PC-9 (cell line): ENCODE measurements at regions of chr6 and their contacts with region 1.

Region 1: DNA sequence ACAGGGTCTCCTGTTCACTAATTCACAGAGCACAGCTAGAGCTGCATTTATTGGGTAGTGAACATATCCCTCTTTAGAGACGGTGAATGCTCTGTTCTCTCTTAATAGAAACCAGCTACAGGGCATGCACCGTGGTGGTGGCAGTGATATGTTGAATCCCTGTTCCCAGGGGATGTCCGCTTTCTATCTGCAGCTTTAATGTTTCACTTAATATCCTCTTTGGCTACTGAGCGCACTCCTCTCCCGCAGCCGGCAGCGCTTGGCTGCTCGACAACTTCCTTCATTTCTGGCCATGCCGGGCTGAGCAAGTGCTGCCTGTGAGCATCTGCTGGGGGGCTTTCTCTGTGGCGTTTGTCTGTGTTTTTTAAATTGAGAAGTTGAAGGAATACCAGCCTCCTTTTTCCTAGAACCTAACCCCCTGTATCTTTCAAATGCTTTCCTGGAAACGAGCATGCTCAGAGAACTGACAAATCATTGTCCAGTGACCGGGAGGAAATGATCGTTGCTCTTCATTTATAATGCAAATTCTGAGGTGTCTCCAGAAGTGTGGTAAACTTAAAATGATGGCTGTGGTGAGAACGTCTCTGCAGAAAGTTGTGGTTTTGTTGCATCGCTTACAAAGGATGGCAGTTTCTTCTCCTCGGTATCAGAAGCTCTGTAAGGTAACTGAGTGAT is 297.9 kb downstream of the UTRN start:
- DNase-seq: no peak
- H3K4me3 ChIP-seq: no peak overlapping the region
- H3K27ac ChIP-seq: no peak overlapping the region
- H3K4me1 ChIP-seq: no peaks in the 10 kb centered on the region
- H3K27me3 ChIP-seq: no peaks in the 10 kb centered on the region
- CTCF ChIP-seq: no peak

Region 2: GRCh38 chr6:144931172-144932035 is 348.3 kb after region 1 on chr6:
- CTCF ChIA-PET with region 1: no interaction called
- POLR2A ChIA-PET with region 1: no interaction called
- intact Hi-C with region 1: loop called (anchors 2 kb)
- DNase-seq: peak; percentile 30 to 49
- H3K4me3 ChIP-seq: no peak overlapping the region
- H3K27ac ChIP-seq: no peak overlapping the region
- H3K4me1 ChIP-seq: 0 out of 2 replicates have a peak, but pooled peaks cover 11% of the 10 kb centered on the region
- H3K27me3 ChIP-seq: no peaks in the 10 kb centered on the region
- CTCF ChIP-seq: peak; percentile 78

Region 3: GRCh38 chr6:145214570-145214969 is 631.5 kb after region 1 on chr6:
- CTCF ChIA-PET with region 1: no interaction called
- POLR2A ChIA-PET with region 1: no interaction called
- intact Hi-C with region 1: loop called (anchors 2 kb)
- DNase-seq: no peak
- H3K4me3 ChIP-seq: no peak overlapping the region
- H3K27ac ChIP-seq: no peak overlapping the region
- H3K4me1 ChIP-seq: no peaks in the 10 kb centered on the region
- H3K27me3 ChIP-seq: no peaks in the 10 kb centered on the region
- CTCF ChIP-seq: peak; percentile 79

Region 4: DNA sequence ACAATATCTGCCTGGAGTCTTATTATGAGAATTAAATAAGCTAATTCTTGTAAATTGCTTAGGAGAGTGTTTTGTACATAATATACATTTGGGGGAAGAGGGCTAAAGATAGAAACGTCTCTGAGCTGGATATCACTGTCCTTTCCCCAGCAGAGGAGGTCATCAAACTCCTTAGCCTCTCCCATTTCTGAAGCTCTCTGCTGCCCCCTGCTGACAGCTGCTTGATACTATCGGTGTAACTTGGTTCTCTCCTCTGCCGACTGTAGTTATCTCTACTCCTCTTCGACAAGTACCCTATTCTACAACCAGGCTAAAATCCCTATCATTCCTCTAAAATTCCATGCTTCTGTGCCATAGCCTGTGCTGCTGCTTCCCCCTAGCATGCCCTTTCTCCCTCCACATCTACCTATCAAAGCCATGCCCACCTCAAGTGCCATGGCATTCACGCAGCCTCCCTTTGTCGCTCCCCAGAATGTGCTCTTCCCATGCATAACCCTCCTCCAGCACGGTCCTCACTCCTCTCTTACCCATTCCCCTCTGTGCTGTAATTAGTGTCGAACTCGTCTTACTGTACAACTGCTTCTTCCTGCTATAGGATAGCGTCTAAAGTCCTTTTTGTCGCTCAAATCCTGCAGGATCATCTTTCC is 1051.0 kb after region 1 on chr6:
- CTCF ChIA-PET with region 1: interaction called, 3 read pairs
- POLR2A ChIA-PET with region 1: no interaction called
- intact Hi-C with region 1: loop called (anchors 1 kb)
- DNase-seq: peak; percentile 43 to 69
- H3K4me3 ChIP-seq: no peak overlapping the region
- H3K27ac ChIP-seq: no peak overlapping the region
- H3K4me1 ChIP-seq: no peaks in the 10 kb centered on the region
- H3K27me3 ChIP-seq: no peaks in the 10 kb centered on the region
- CTCF ChIP-seq: peak; percentile 91

Region 5: GRCh38 chr6:145704143-145704781 is 1121.2 kb after region 1 on chr6:
- CTCF ChIA-PET with region 1: no interaction called
- POLR2A ChIA-PET with region 1: no interaction called
- intact Hi-C with region 1: loop called (anchors 10 kb)
- DNase-seq: no peak
- H3K4me3 ChIP-seq: no peak overlapping the region
- H3K27ac ChIP-seq: no peak overlapping the region
- H3K4me1 ChIP-seq: no peaks in the 10 kb centered on the region
- H3K27me3 ChIP-seq: no peaks in the 10 kb centered on the region
- CTCF ChIP-seq: peak; percentile 78